ENCODE measurements at regions of chr10 and their contacts with region 1.

Region 1: DNA sequence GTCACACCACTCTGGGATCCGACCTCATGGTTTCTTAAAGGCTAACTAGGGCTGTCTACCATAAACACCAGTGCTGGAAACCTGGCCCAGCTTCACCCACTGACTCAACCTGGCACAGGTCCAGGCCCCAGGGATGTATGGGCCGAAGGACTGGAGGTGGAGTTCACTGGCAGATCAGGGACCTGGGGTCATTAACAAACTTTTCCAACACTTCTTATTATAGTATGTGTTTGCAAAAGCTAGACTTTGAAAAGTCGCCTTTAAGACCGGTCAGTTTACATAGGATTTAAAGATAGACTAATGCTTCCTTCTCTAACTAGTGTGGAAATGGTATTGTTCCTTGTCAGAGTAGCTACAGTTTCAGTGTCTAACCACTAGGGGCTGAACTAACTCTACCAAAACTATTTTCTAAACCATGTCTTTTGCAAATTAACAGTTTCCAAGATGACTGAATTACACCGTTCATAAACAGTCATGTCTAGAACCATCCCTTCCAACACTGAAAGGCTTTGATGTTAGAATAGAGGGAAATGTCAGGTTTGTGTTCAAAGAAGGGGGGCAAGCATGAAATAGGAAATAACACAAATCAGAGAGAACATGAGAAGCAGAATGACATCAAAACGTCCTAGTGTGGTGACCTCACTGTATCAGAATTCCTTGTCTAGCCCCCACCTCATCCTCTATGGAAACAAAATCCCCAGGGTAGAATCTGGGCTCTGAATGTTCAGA is 29.7 kb downstream of the STN1 start:
- DNase-seq: no peak
- ATAC-seq: peak; percentile 52

Region 2: DNA sequence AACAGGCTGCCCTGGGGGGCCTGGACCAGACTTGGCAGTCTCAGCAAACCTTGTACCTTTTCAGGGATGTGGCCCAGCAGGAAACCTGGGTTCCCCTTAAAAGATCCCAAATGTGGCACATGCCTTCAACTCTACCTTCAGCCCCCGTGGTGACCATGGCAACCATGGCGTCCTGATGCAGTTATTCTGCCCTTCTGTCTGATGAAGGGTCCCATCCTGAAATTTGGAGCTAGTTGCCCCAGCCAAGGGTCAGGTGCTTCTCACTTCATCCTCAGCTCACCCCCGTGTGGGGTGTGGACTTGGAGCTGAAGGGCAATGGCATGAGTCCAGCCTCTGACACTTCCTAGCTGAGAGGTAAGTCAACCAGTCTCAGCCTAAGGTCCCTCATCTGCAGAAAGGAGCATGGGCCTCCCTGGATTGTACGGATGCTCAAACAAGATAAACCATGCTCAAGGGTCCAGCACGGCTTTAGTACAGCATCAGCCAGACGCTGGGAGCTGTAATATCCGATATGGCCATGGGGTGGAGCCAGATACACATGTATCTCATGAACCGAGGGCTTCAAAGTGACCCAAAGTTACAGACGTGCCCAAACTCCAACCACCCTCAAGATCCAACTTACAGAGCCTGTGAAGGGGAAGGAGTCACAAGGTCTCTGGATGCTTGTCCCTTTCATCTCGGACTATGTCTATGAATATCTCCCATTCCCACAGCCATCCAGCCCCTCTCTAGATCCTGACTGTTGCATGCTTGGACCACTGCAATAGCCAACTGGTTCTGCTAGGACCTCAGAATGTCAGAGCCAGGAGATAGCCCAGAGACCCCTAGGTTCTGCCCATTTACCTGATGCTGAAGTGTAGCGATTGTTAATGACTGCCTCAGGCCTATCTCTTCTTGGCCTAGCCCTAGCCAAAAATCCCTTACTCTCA is 175.4 kb before region 1 on chr10:
- intact Hi-C with region 1: loop called (anchors 1 kb)
- DNase-seq: peak; percentile 81
- ATAC-seq: peak; percentile 86

Region 3: DNA sequence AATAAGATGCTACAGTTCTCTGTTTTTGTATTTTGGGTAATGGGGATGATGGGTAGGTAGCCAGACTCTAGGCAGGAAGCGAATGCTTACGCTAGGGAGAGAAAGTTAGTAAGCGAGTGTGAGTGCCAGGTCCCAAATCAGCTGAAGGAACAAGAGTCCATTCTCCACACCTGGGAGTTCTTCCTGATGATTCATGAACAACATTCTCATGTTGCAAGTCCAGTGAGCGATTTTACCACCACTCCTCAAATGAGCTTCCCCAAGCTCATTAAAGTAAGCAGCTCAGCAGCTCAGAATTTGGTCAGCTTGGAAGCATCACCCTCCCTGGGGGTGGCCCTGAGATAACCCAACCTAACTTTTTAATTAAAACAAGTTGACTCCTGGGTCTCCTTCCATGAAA is 60.2 kb before region 1 on chr10:
- intact Hi-C with region 1: no loop called
- DNase-seq: no peak
- ATAC-seq: no peak

Region 4: DNA sequence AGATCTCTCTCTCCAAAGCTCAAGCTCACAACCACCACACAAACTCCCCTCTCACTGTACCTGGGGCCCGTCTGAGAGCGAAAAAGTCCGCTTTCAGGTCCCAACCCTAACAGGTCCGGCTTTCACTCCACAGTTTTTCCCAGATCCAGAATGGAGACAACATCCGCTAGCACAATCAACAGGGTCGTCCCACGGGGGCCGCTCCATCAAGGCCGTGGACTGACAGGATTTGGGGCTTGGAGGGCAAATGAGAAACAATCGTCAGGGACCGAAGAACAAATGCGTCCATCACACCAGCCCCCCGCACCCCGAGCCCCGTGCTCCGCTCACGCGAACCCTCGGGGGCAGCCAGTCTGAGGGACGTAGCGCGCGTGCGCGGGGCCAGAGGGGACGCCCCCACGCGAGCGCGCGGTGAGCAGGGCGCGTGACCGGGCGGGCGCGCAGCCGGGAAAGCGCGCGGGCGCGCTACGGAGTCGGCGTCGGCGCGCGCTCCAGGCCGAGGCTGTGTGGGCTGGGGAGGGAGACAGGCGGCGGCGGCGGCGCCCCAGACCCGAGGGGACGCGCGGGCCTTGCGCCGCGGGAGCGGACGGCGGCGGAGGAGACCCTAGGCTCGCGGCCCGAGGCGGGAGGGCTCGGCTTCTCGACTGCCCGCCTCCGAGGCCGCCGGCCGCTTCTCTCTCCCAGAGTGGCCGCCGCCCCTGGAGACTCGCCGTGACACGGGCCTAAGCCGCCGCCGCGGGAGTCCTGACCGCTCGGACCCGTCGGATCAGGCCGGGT is 78.6 kb after region 1 on chr10 and contains the start of gene SLK:
- intact Hi-C with region 1: loop called (anchors 2 kb)
- DNase-seq: peak; percentile 93
- ATAC-seq: peak; percentile 98
- total RNA-seq, gene SLK: 28.9 TPM

Region 5: GRCh38 chr10:103983367-103983911 is 95.2 kb after region 1 on chr10:
- intact Hi-C with region 1: loop called (anchors 5 kb)
- DNase-seq: no peak
- ATAC-seq: no peak

Region 6: GRCh38 chr10:104028146-104028545 is 139.9 kb after region 1 on chr10:
- intact Hi-C with region 1: loop called (anchors 5 kb)
- DNase-seq: no peak
- ATAC-seq: peak; percentile 90

Region 7: DNA sequence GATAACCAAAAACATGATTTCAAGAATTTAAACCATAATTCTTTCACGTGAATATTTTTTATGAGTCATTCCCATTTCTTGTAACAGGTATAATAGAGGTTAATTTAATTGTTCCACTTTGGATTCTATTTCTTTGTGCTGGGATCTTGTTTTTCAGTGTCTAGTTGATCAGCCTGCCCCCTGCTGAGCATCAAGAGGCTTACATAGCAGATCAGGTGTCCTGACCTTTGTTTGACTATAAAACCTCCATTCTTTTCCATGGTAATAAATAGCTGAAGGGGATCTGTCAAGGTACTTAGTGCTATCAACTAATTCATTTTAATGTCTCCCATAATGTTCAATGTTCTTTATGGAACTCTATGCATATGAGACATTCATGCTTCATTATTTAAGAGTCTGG is 192.5 kb after region 1 on chr10:
- intact Hi-C with region 1: loop called (anchors 5 kb)
- DNase-seq: no peak
- ATAC-seq: no peak

Region 8: DNA sequence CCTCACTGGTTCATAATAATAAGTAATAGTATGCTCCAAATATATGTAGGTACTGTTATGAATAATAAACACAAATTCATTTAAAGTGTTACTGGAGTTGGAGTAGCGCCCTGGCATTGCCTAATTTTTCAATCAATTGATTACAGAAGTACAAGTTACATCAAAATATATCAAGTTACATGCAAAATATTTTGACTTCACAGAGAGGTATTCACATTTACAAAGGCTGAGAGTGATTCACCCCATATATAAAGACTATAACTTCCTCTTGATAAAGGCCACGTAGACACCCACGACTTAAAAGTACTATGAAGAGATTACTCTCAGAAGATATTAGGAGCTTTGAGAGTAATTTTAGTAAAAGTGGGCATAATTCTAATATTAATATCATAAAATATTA is 211.0 kb after region 1 on chr10:
- intact Hi-C with region 1: no loop called
- DNase-seq: no peak
- ATAC-seq: no peak

Region 9: DNA sequence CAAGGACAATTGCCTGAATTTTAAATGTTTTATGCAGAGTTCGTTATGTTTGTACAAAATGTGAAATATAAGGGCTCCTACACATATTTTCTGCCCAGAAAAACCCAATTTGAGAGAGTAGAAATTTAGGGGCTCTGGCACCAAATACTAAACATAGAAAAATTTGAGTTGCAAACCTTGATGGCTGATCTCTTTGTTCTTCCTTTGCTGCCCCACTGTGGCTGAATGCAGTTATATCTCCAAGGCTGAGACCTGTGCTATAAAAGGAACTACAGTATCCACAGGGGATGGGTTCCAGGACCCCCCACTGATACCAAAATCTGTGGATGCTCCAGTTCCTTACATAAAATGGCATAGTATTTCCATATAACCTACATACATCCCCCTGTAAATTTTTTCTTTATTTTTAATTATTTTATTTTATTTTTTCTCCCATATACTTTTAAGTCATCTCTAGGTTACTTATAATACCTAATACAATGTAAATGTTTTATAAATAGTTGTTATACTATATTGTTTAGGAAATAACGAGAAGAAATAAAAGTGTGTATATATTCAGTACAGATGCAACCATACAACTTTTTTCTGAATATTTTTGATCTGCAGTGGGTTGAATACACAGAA is 321.4 kb after region 1 on chr10:
- intact Hi-C with region 1: loop called (anchors 2 kb)
- DNase-seq: no peak
- ATAC-seq: no peak